KBM-7 (cell line): ENCODE measurements at regions of chr7 and their contacts with region 1.

Region 1: DNA sequence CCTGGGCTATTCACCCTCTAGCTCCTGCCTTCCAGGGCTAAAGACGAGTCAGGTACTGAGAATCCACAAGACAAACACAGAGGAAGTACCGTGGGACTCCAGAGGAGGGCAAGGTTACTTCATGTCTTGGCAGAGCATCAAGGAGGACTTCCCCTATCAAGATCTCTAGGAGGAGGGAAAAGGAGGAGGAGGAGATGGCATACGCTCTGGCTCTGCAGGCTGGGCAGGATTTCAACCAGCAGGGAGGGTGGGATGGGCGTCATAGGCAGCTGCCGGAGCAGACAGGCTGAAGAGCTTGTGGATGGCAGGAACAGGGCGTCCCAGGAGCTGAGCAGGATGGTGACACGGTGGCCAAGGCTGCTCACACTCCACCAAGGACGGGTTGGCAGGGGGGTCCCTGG is 21.3 kb downstream of the MDH2 start:
- DNase-seq: peak; percentile 84

Region 2: DNA sequence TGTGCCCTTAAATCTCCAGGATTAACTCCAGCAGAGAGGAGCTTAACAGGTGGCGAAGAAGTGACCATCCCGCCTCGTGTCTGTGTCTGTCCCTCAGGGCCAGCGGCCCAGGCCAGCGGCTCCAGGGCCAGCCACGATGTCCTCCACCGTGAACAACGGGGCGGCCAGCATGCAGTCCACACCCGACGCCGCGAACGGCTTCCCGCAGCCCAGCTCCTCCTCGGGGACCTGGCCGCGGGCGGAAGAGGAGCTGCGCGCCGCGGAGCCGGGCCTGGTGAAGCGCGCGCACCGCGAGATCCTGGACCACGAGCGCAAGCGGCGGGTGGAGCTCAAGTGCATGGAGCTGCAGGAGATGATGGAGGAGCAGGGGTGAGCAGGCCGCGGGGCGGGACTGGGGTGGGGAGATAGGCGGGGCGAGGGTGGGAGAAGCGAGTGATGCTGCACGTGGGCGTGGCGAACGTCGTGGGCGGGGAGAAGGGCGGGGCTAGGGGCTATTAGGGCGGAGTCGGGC is 165.7 kb after region 1 on chr7:
- in situ Hi-C with region 1: loop called (anchors 25 kb)
- DNase-seq: peak; percentile 40

Region 3: GRCh38 chr7:76515999-76516443 is 446.8 kb after region 1 on chr7:
- in situ Hi-C with region 1: no loop called
- DNase-seq: peak; percentile 71